Tibial artery (tissue), 4 donors: ENCODE measurements at regions of chr13 and their contacts with region 1.

Region 1: GRCh38 chr13:48595431-48596429 is 58.0 kb upstream of the CYSLTR2 start:
- DNase-seq: peak in 1 of 2 donors; percentile 51
- H3K4me3 ChIP-seq: no peak overlapping the region
- H3K27ac ChIP-seq: no peak overlapping the region
- H3K4me1 ChIP-seq: no peaks in the 10 kb centered on the region
- H3K27me3 ChIP-seq: no peaks in the 10 kb centered on the region
- CTCF ChIP-seq: peak; percentile 56 to 57

Region 2: GRCh38 chr13:48643159-48643558 is 47.4 kb after region 1 on chr13:
- intact Hi-C with region 1: no loop called
- DNase-seq: no peak
- H3K4me3 ChIP-seq: no peak overlapping the region
- H3K27ac ChIP-seq: no peak overlapping the region
- H3K4me1 ChIP-seq: no peaks in the 10 kb centered on the region
- H3K27me3 ChIP-seq: peaks cover 0 to 4% of the 10 kb centered on the region in 2 donors
- CTCF ChIP-seq: no peak

Region 3: DNA sequence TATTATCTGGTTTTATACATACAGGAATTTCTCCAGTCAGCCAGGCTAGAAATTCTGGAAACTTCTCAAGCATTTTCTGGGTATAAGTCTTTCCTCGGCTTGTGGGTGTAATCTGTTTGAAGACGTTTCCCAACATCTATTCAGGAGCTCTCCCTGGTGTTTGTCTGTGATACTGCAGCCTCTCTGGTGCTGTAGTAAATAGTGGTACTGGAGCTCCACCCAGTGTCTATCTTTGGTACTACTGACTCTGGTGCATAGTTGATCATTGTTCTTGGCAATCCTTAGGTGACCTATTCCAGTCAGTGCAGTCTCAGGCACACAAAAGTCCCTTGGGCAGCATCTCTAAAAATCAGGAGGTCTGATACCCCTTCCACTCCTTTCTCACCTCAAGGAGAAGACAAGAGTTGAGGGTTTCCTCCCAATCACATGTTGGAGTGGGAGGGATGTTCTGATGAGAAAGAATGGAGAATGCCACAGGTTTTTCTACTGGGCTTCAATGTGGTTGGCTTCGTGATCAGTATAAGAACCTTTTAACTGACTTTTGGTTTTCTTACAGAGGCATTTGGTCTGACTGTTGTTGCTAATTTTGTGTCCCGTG is 173.5 kb after region 1 on chr13:
- intact Hi-C with region 1: loop called (anchors 2 kb)
- DNase-seq: peak; percentile 82 to 93
- H3K4me3 ChIP-seq: no peak overlapping the region
- H3K27ac ChIP-seq: no peak overlapping the region
- H3K4me1 ChIP-seq: no peaks in the 10 kb centered on the region
- H3K27me3 ChIP-seq: no peaks in the 10 kb centered on the region
- CTCF ChIP-seq: peak; percentile 96 to 99

Region 4: DNA sequence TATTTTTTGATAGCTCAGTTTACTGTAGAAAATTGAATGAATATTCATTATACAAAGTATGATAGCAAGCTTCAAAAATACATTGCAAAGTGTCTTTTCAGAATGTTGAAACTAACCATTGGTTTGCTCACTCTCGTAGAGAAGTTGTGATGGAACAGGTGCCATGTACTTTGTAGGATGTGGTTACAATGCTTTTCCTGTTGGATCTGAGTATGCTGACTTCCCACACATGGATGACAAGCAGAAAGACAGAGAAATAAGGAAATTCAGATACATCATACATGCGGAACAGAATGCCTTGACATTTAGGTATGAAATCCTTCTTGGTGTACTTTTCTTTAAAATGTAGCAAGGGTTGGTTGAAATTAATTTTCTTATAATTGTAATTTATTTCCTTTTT is 682.5 kb after region 1 on chr13:
- intact Hi-C with region 1: loop called (anchors 5 kb)
- DNase-seq: no peak
- H3K4me3 ChIP-seq: no peak overlapping the region
- H3K27ac ChIP-seq: no peak overlapping the region
- H3K4me1 ChIP-seq: no peaks in the 10 kb centered on the region
- H3K27me3 ChIP-seq: no peaks in the 10 kb centered on the region
- CTCF ChIP-seq: no peak